ENCODE measurements at regions of chr4 and their contacts with region 1.

Region 1: DNA sequence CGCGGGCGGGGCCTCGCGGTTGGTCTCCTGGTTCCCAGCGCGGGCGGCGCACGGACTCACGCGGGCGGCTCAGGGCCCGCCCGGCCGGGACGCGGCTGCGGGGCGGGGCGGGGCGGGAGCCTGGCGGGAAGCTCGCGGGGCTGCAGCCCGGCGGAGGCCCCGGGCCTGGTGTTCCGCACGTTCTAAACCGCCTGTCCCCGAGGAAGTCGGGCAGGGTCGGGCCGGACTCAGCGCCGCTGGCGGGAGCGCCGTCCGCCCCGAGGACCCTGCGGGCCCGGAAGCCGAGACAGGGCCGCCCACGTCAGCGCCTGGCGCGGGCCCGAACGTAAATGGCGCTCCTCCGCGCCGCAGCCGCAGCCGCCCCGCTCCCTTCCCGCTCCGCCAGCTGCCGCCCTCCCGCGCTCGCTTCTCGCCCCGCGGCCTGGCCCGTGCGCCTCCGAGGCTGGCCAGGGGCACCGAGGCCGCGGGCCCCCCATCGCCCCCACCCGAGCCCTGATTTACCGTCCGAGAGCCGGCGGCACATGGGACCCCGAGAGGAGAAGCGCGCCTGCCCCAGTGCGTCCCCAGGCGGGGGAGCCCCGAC is 309 bp upstream of the CTBP1 start:
- DNase-seq: peak; percentile 80 to 90
- H3K4me3 ChIP-seq: peak overlapping the region; percentile 47
- H3K4me3 Mint-ChIP-seq: peak overlapping the region; percentile 79
- H3K27ac Mint-ChIP-seq: peak overlapping the region; percentile 89
- H3K4me1 ChIP-seq: peaks cover 16% of the 10 kb centered on the region
- H3K4me1 Mint-ChIP-seq: peaks cover 7% of the 10 kb centered on the region
- H3K27me3 ChIP-seq: no peaks in the 10 kb centered on the region
- H3K27me3 Mint-ChIP-seq: no peaks in the 10 kb centered on the region
- CTCF ChIP-seq: no peak

Region 2: DNA sequence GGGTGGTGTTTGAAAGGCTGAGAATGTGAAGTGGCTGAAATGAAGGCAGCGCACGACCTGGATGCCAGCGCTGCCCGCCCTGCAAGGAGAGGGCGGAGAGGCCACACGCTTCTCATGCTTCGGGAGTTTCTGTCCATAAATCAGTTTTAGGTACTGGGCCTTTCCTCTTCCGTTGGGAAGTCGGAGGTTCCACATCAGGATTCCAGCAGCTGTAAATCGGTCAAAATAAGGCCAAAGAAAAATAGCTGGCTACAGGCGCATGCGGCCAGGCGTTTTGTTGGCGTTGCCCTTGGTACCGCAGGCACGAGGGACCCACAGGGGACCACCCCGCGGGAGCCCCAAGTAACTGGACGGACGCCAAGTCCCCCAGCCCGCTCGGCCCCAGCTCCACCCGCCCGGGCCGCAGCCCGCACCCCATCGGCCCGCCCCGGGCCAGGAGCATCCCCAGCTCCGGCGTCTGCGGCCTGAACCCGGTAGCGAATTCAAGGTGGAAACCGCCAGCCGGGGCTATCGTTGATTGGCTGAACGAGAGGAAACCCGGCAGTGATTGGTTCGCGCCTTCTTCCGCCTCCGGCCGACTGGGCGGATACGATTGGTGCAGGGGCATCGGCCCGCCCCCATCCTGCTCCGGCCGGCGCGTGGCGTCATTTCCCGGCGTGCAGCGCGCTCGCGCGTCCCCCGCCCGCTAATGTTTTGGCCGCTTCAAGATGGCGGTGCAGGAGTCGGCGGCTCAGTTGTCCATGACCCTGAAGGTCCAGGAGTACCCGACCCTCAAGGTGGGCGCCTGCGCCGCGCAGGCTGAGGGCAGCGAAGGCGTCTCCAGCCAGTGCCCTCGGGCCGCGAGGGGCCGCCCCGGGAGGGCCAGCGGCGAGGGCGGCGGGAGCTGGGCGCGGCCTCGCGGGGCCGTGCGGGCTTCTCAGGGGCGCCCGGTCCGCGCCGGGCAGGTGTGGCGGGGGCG is 40.2 kb after region 1 on chr4 and contains the start of gene MAEA:
- CTCF ChIA-PET with region 1: interaction called, 4 read pairs
- POLR2A ChIA-PET with region 1: interaction called, 7 read pairs
- intact Hi-C with region 1: loop called (anchors 1 kb)
- DNase-seq: peak; percentile 96 to 97
- H3K4me3 ChIP-seq: peak within 1 kb of the TSS; percentile 97
- H3K4me3 Mint-ChIP-seq: peak within 1 kb of the TSS; percentile 96
- H3K27ac Mint-ChIP-seq: peak within 1 kb of the TSS; percentile 95
- H3K4me1 ChIP-seq: peaks cover 16% of the 10 kb centered on the region
- H3K4me1 Mint-ChIP-seq: no peaks in the 10 kb centered on the region
- H3K27me3 ChIP-seq: no peaks in the 10 kb centered on the region
- H3K27me3 Mint-ChIP-seq: no peaks in the 10 kb centered on the region
- CTCF ChIP-seq: no peak
- total RNA-seq, gene MAEA: 81.1 and 89.3 TPM in 2 replicates

Region 3: GRCh38 chr4:1346781-1347409 is 97.7 kb after region 1 on chr4 and contains the start of gene UVSSA:
- CTCF ChIA-PET with region 1: no interaction called
- POLR2A ChIA-PET with region 1: interaction called, 25 read pairs
- intact Hi-C with region 1: loop called (anchors 1 kb)
- DNase-seq: peak; percentile 100
- H3K4me3 ChIP-seq: peak within 1 kb of the TSS; percentile 91
- H3K4me3 Mint-ChIP-seq: peak within 1 kb of the TSS; percentile 85
- H3K27ac Mint-ChIP-seq: peak within 1 kb of the TSS; percentile 83
- H3K4me1 ChIP-seq: 0 out of 2 replicates have a peak, but pooled peaks cover 10% of the 10 kb centered on the region
- H3K4me1 Mint-ChIP-seq: peaks cover 20% of the 10 kb centered on the region
- H3K27me3 ChIP-seq: no peaks in the 10 kb centered on the region
- H3K27me3 Mint-ChIP-seq: no peaks in the 10 kb centered on the region
- CTCF ChIP-seq: no peak
- total RNA-seq, gene UVSSA: 26.3 and 27.4 TPM in 2 replicates